Ascending aorta (tissue), 2 donors: ENCODE measurements at regions of chr6 and their contacts with region 1.

Region 1: GRCh38 chr6:132115714-132116366 is 164.7 kb upstream of the CCN2 start:
- DNase-seq: no peak
- H3K4me3 ChIP-seq: peak overlapping the region; percentile 20 to 57
- H3K27ac ChIP-seq: peak overlapping the region; percentile 64 to 74
- H3K4me1 ChIP-seq: peaks cover 0 to 18% of the 10 kb centered on the region in 2 donors
- H3K27me3 ChIP-seq: no peaks in the 10 kb centered on the region
- CTCF ChIP-seq: no peak

Region 2: DNA sequence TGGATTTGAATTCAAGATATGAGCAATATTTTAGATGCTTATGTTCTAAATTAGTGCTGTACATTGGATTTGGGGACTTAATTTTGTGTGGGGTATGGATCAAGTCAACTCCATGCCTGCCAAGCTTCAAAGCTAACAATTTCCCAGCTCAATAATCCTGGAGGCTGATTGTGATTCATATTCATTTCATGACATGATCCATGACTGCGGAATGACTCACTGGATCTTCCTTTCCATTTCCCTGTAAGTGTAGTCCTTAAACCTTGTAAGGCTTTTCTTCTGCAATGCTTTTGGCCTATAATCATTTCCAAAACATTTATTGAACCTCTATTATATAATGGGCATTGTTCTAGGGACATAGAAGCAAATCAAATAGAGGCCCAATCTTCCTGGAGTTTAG is 119.9 kb before region 1 on chr6:
- intact Hi-C with region 1: no loop called
- DNase-seq: no peak
- H3K4me3 ChIP-seq: no peak overlapping the region
- H3K27ac ChIP-seq: no peak overlapping the region
- H3K4me1 ChIP-seq: peaks cover 0 to 12% of the 10 kb centered on the region in 2 donors
- H3K27me3 ChIP-seq: no peaks in the 10 kb centered on the region
- CTCF ChIP-seq: no peak

Region 3: DNA sequence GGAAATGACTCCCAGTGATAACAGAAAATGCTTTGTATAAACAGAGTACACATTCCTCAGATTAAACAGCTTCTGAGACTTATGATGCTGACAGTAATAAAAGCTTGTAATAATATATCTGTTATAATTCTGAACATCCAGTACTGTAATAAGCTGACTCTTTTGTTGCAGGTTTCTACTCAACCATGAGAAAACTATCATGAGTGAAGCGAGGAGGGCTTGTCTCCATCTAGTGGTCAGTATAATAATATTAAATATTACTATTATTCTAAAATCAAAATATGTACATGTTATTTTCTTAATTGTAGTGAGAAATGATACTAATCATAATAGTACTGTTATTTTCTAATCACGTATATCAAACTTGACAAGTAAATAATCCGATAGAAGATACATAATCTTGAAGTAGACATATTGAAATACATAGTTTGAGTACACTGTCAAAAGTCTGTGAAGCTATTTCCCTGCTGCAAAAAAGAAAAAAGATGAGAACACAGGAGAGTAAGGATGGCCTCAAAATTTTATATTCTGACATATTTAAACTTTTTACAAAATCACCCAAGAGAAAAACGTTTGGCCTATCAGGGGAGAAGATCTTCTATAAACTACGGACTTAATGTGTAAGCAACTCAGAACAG is 102.3 kb after region 1 on chr6:
- intact Hi-C with region 1: loop called (anchors 5 kb)
- DNase-seq: no peak
- H3K4me3 ChIP-seq: no peak overlapping the region
- H3K27ac ChIP-seq: no peak overlapping the region
- H3K4me1 ChIP-seq: peaks cover 0 to 2% of the 10 kb centered on the region in 2 donors
- H3K27me3 ChIP-seq: no peaks in the 10 kb centered on the region
- CTCF ChIP-seq: peak; percentile 37 to 66 (median 63)